ENCODE measurements at regions of chr4 and their contacts with region 1.

Region 1: DNA sequence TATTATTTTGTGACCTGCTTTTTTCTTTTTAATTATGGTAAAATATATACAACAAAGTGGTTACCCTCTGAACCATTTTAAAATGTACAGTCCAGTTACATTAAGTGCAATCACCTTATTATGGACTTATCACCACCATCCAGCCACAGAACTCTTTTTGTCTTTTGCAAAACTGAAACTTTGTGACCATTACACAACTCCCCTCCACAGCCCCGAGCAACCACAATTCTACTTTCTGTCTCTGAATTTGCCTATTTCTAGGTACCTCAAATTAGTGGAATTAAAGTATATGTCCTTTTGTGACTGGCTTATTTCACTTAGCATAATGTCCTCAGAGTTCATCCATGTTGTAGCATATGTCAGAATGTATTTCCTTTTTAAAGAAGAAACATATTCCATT is 39.3 kb upstream of the WWC2 start:
- DNase-seq: no peak
- ATAC-seq: no peak
- H3K4me3 ChIP-seq: no peak overlapping the region
- H3K4me3 Mint-ChIP-seq: no peak overlapping the region
- H3K27ac ChIP-seq: no peak overlapping the region
- H3K27ac Mint-ChIP-seq: no peak overlapping the region
- H3K4me1 ChIP-seq: no peaks in the 10 kb centered on the region
- H3K4me1 Mint-ChIP-seq: no peaks in the 10 kb centered on the region
- H3K27me3 ChIP-seq: no peaks in the 10 kb centered on the region
- H3K27me3 Mint-ChIP-seq: peaks cover 18% of the 10 kb centered on the region
- CTCF ChIP-seq: no peak

Region 2: GRCh38 chr4:183074296-183074990 is 14.6 kb after region 1 on chr4:
- CTCF ChIA-PET with region 1: interaction called, 12 read pairs
- POLR2A ChIA-PET with region 1: no interaction called
- intact Hi-C with region 1: no loop called
- DNase-seq: no peak
- ATAC-seq: no peak
- H3K4me3 ChIP-seq: no peak overlapping the region
- H3K4me3 Mint-ChIP-seq: no peak overlapping the region
- H3K27ac ChIP-seq: no peak overlapping the region
- H3K27ac Mint-ChIP-seq: no peak overlapping the region
- H3K4me1 ChIP-seq: no peaks in the 10 kb centered on the region
- H3K4me1 Mint-ChIP-seq: no peaks in the 10 kb centered on the region
- H3K27me3 ChIP-seq: no peaks in the 10 kb centered on the region
- H3K27me3 Mint-ChIP-seq: peaks cover 17% of the 10 kb centered on the region
- CTCF ChIP-seq: no peak